Right ventricle myocardium superior (tissue), 1 donor: ENCODE measurements at regions of chr15 and their contacts with region 1.

Region 1: GRCh38 chr15:29711531-29711930 is 110.7 kb downstream of the TJP1 start:
- DNase-seq: no peak
- ATAC-seq: no peak

Region 2: GRCh38 chr15:29774900-29775299 is 63.4 kb after region 1 on chr15:
- intact Hi-C with region 1: loop called (anchors 10 kb)
- DNase-seq: no peak
- ATAC-seq: no peak